ENCODE measurements at regions of chr19 and their contacts with region 1.

Region 1: DNA sequence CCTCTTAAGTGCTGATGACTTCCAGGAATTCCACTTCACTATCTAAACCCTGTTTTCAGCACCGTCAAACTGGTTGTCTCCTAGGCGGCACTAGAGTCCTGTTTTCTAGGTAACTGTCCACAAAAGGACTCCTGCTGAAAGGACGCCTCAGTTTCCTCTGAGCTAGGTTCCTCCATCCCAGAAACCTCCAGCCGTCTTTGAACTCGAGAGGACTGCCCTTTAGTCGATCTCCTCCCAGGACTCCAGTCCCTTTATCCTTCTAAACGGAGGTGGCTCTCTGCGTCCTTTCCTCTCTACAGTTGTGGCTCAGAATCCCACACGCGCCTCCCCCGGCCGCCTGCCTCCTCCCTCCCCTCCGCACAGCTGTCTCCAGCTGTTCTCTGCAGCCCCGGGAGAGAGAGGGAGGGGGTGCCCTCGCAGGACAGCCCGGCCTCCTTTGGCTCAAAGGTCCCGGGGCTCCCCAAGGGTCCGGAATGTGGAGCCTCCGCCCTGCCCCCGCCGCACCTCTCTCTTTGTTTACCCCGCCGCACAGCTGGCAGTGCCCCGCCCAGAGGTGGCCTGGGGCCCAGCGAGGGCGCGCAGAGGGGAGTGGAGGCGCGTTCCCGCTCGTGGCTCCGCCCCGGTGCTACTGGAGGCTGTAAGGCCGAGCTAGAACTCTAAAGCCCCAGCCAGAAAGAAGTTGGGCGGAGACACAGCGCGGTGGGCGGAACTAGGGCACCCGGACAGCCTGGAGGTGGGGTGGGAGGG is 2.4 kb downstream of the LTBP4 start:
- DNase-seq: peak; percentile 82 to 96 (median 93)
- ATAC-seq: peak; percentile 86
- H3K4me3 ChIP-seq: peak overlapping the region; percentile 72
- H3K4me3 Mint-ChIP-seq: peak overlapping the region; percentile 84 to 98 (median 88)
- H3K27ac ChIP-seq: peak overlapping the region; percentile 35
- H3K27ac Mint-ChIP-seq: peak overlapping the region; percentile 72 to 93 (median 86)
- H3K4me1 ChIP-seq: peaks cover 54 to 61% of the 10 kb centered on the region in 2 donors
- H3K4me1 Mint-ChIP-seq: peaks cover 20 to 84% (median 71%) of the 10 kb centered on the region in 7 donors
- H3K27me3 ChIP-seq: peaks cover 10 to 21% of the 10 kb centered on the region in 2 donors
- H3K27me3 Mint-ChIP-seq: peaks cover 24 to 39% (median 30%) of the 10 kb centered on the region in 5 donors

Region 2: DNA sequence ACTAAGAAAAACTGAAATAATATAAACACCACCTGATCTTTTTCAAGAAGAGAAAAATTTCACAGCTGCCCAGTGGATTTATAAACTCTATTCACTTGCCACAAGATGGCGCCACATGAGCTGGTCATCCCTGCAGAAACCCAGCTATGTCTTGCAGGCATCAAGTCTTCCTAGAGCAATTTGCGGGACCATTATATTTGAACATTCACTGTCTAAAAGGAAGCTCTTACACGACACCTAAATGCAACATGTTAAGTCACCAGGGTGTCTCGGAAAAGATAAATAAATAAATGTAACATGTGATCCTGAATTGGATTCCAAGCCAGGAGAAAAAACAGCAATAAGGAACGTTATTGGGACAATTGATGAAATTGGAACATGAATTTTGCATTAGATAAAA is 298.2 kb before region 1 on chr19:
- CTCF ChIA-PET with region 1: interaction called, 9 read pairs
- POLR2A ChIA-PET with region 1: no interaction called
- intact Hi-C with region 1: loop called (anchors 1 kb)
- DNase-seq: peak; percentile 39 to 75 (median 63)
- ATAC-seq: peak; percentile 80
- H3K4me3 ChIP-seq: no peak overlapping the region
- H3K4me3 Mint-ChIP-seq: no peak overlapping the region
- H3K27ac ChIP-seq: no peak overlapping the region
- H3K27ac Mint-ChIP-seq: no peak overlapping the region
- H3K4me1 ChIP-seq: no peaks in the 10 kb centered on the region
- H3K4me1 Mint-ChIP-seq: peaks cover 0 to 5% (median 4%) of the 10 kb centered on the region in 7 donors
- H3K27me3 ChIP-seq: no peaks in the 10 kb centered on the region
- H3K27me3 Mint-ChIP-seq: no peaks in the 10 kb centered on the region

Region 3: GRCh38 chr19:40425450-40426287 is 177.9 kb before region 1 on chr19 and contains the start of gene SERTAD1:
- CTCF ChIA-PET with region 1: no interaction called
- POLR2A ChIA-PET with region 1: interaction called, 11 read pairs
- intact Hi-C with region 1: loop called in 1 of 2 experiments (anchors 2 kb)
- DNase-seq: peak; percentile 99 to 100 (median 100)
- ATAC-seq: peak; percentile 96
- H3K4me3 ChIP-seq: peak within 1 kb of the TSS; percentile 77
- H3K4me3 Mint-ChIP-seq: peak within 1 kb of the TSS; percentile 90 to 99 (median 96)
- H3K27ac ChIP-seq: peak within 1 kb of the TSS; percentile 87
- H3K27ac Mint-ChIP-seq: peak within 1 kb of the TSS; percentile 92 to 100 (median 98)
- H3K4me1 ChIP-seq: peaks cover 15 to 18% of the 10 kb centered on the region in 2 donors
- H3K4me1 Mint-ChIP-seq: peaks cover 12 to 38% (median 24%) of the 10 kb centered on the region in 7 donors
- H3K27me3 ChIP-seq: no peaks in the 10 kb centered on the region
- H3K27me3 Mint-ChIP-seq: peaks cover 0 to 2% (median 0%) of the 10 kb centered on the region in 5 donors
- total RNA-seq, gene SERTAD1: 8.1 to 30.9 (median 13.5) TPM

Region 4: DNA sequence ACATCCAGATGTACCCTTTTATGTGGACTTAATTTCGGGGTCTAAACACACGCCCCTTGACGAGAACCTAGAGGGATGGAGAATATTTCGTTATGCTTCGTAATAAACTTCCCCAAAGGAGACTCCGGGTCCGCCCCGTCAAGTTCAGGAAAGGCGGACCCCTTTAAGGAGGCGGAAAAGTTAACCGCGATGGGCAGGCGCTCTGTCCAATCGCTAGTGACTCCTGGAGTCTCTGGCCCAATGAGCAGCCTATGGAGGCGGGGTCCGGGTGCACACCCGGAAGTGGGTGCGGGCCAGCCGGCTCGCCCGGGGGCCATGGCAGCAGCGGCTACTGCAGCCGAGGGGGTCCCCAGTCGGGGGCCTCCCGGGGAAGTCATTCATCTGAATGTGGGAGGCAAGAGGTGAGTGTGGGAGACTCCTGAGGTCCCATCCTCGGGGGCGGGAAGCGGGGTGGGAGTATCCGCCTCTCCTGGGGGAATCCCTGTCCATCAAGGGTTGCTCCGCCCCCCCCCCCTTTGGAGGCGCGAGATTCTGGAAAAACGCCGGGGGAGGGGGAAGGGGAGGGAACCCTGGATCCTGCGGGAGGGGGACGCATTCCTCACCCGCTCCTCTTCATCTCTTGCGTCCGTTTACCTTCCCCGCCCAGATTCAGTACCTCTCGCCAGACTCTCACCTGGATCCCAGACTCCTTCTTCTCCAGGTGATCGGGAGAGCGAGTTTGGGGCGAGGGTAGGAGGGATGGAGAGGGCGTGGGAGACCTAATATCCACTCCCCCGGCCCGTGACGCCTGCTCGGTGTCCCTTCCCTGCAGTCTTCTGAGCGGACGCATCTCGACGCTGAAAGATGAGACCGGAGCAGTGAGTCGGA is 26.7 kb before region 1 on chr19 and contains the start of gene SHKBP1:
- CTCF ChIA-PET with region 1: interaction called, 3 read pairs
- POLR2A ChIA-PET with region 1: interaction called, 11 read pairs
- intact Hi-C with region 1: loop called (anchors 1 to 2 kb)
- DNase-seq: peak; percentile 84 to 93 (median 92)
- ATAC-seq: peak; percentile 97
- H3K4me3 ChIP-seq: peak within 1 kb of the TSS; percentile 84
- H3K4me3 Mint-ChIP-seq: peak within 1 kb of the TSS; percentile 80 to 96 (median 90)
- H3K27ac ChIP-seq: peak within 1 kb of the TSS; percentile 77
- H3K27ac Mint-ChIP-seq: peak within 1 kb of the TSS; percentile 79 to 96 (median 87)
- H3K4me1 ChIP-seq: peaks cover 14 to 22% of the 10 kb centered on the region in 2 donors
- H3K4me1 Mint-ChIP-seq: peaks cover 16 to 26% (median 20%) of the 10 kb centered on the region in 7 donors
- H3K27me3 ChIP-seq: no peaks in the 10 kb centered on the region
- H3K27me3 Mint-ChIP-seq: no peaks in the 10 kb centered on the region
- total RNA-seq, gene SHKBP1: 98.4 to 218 (median 139) TPM

Region 5: DNA sequence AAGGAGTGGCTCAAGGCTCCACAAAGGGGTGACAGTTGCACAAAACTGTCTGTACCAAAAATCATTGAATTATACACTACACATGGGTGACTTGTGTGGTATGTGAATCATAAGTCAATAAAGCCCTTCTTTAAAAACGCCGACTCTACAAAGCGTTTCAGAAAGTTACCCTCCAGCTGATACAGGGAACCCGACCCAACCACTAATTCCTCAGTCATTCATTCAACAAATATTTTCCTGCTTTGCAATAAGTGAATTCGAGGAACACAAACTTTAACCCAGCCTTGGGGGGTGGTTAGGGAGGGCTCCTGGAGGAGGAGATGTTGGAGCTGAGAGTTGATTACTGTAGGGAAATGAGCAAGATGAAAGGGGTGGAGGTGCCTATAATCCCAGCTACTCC is 29.6 kb after region 1 on chr19:
- CTCF ChIA-PET with region 1: interaction called, 42 read pairs
- POLR2A ChIA-PET with region 1: interaction called, 11 read pairs
- intact Hi-C with region 1: loop called in 1 of 2 experiments (anchors 1 kb)
- DNase-seq: no peak
- ATAC-seq: no peak
- H3K4me3 ChIP-seq: no peak overlapping the region
- H3K4me3 Mint-ChIP-seq: no peak overlapping the region
- H3K27ac ChIP-seq: no peak overlapping the region
- H3K27ac Mint-ChIP-seq: peak overlapping the region in 2 of 9 donors; percentile 11 to 78
- H3K4me1 ChIP-seq: peaks cover 4 to 5% of the 10 kb centered on the region in 2 donors
- H3K4me1 Mint-ChIP-seq: peaks cover 7 to 19% (median 16%) of the 10 kb centered on the region in 7 donors
- H3K27me3 ChIP-seq: no peaks in the 10 kb centered on the region
- H3K27me3 Mint-ChIP-seq: peaks cover 0 to 20% (median 0%) of the 10 kb centered on the region in 5 donors

Region 6: DNA sequence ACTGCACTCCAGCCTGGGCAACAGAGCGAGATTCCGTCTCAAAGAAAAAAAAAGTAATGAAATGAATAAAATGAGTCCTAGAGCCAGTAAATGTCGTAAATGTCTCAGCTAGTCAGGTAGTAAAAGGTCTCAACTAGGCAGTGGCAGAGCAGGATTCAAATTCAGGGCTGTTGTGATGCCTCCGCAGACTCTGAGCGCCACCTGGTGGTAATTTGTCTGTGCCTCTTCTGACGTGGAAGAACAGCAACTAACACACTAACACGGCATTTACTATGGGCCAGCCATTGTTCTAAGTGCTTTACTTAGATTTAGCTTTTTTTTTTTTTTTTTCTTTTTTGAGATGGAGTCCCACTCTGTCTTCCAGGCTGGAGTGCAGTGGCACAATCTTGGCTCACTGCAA is 540.8 kb after region 1 on chr19:
- CTCF ChIA-PET with region 1: interaction called, 10 read pairs
- POLR2A ChIA-PET with region 1: no interaction called
- intact Hi-C with region 1: no loop called
- DNase-seq: peak; percentile 68 to 88 (median 84)
- ATAC-seq: peak; percentile 96
- H3K4me3 ChIP-seq: no peak overlapping the region
- H3K4me3 Mint-ChIP-seq: no peak overlapping the region
- H3K27ac ChIP-seq: no peak overlapping the region
- H3K27ac Mint-ChIP-seq: peak overlapping the region in 4 of 9 donors; percentile 44 to 78 (median 58)
- H3K4me1 ChIP-seq: no peaks in the 10 kb centered on the region
- H3K4me1 Mint-ChIP-seq: peaks cover 0 to 3% (median 0%) of the 10 kb centered on the region in 7 donors
- H3K27me3 ChIP-seq: no peaks in the 10 kb centered on the region
- H3K27me3 Mint-ChIP-seq: peaks cover 0 to 29% (median 15%) of the 10 kb centered on the region in 5 donors